ENCODE measurements at regions of chr4 and their contacts with region 1.

Region 1: GRCh38 chr4:108030332-108030731 is 40.6 kb downstream of the HADH start:
- DNase-seq: peak; percentile 66
- H3K4me3 Mint-ChIP-seq: no peak overlapping the region
- H3K27ac Mint-ChIP-seq: peak overlapping the region; percentile 70
- H3K4me1 Mint-ChIP-seq: peaks cover 41% of the 10 kb centered on the region
- H3K27me3 Mint-ChIP-seq: no peaks in the 10 kb centered on the region

Region 2: GRCh38 chr4:108018040-108018883 is 12.1 kb before region 1 on chr4:
- intact Hi-C with region 1: no loop called
- DNase-seq: peak; percentile 70
- H3K4me3 Mint-ChIP-seq: no peak overlapping the region
- H3K27ac Mint-ChIP-seq: peak overlapping the region; percentile 50
- H3K4me1 Mint-ChIP-seq: peaks cover 7% of the 10 kb centered on the region
- H3K27me3 Mint-ChIP-seq: no peaks in the 10 kb centered on the region

Region 3: GRCh38 chr4:108118490-108118889 is 88.2 kb after region 1 on chr4:
- intact Hi-C with region 1: loop called (anchors 1 kb)
- DNase-seq: no peak
- H3K4me3 Mint-ChIP-seq: peak overlapping the region; percentile 38
- H3K27ac Mint-ChIP-seq: peak overlapping the region; percentile 71
- H3K4me1 Mint-ChIP-seq: peaks cover 80% of the 10 kb centered on the region
- H3K27me3 Mint-ChIP-seq: no peaks in the 10 kb centered on the region

Region 4: DNA sequence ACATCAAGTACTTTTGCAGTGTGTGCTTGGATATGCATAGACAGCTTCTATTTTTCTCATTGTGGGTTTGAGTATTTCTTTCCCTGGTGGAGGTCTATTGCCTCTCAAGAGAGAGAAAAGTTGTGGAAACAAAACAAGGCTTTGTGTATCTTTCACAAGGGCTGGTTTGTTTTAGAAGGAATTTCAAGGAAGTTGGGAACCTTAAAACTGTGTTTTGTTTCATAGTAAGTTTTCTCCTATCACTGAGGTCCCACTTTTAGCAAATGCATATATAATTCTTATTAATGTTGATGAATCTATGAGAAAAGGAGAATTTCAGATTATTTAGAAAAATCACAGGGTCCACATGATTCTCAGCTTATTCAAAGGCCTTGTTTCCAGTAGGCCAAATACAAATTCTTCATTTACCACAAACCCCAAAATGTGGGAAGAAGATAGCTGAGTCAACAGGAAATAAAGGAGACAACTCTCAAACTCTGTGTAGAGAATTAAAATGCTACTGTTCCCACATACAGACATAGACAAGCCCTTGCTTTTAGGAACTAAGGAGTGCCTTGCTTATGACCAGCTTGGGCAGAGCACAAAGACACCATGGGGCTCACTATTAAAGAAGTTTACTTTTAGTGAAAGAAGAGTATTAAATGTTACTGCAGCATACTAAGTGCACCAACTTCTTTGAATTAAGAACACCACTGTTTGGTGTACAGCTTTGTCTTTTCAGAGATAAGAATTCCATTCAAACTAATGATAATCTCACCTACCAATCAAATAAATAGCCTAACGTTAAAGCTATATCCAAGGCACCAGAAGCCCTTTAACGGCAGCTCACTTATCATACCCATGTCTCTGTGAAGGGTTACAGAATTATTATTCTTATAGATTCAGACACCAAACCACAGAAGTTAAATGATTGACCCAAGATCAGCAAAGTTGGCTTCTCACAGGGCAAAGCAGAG is 315.8 kb after region 1 on chr4:
- intact Hi-C with region 1: loop called (anchors 10 kb)
- DNase-seq: no peak
- H3K4me3 Mint-ChIP-seq: no peak overlapping the region
- H3K27ac Mint-ChIP-seq: no peak overlapping the region
- H3K4me1 Mint-ChIP-seq: peaks cover 34% of the 10 kb centered on the region
- H3K27me3 Mint-ChIP-seq: no peaks in the 10 kb centered on the region

Region 5: DNA sequence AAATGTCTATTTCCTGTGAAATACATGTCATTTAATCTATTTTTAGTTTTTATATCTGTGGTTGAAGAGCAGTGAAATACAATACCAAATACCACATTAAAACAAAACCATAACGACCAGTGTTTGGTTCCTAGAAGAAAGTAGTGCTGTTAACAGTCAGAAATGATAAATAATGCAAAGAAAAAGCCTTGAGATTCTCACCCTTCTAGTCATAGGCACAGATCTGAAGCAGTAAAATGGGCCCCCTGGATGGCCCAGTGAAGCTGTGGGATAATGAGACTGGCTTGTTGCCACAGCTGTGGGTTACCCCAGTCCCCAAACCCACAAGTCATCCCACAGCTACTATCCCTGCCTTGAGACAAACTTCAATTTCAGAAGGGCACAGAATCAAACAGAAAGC is 452.7 kb after region 1 on chr4:
- intact Hi-C with region 1: loop called (anchors 5 kb)
- DNase-seq: peak; percentile 35
- H3K4me3 Mint-ChIP-seq: peak overlapping the region; percentile 60
- H3K27ac Mint-ChIP-seq: peak overlapping the region; percentile 69
- H3K4me1 Mint-ChIP-seq: peaks cover 36% of the 10 kb centered on the region
- H3K27me3 Mint-ChIP-seq: peaks cover 4% of the 10 kb centered on the region

Region 6: DNA sequence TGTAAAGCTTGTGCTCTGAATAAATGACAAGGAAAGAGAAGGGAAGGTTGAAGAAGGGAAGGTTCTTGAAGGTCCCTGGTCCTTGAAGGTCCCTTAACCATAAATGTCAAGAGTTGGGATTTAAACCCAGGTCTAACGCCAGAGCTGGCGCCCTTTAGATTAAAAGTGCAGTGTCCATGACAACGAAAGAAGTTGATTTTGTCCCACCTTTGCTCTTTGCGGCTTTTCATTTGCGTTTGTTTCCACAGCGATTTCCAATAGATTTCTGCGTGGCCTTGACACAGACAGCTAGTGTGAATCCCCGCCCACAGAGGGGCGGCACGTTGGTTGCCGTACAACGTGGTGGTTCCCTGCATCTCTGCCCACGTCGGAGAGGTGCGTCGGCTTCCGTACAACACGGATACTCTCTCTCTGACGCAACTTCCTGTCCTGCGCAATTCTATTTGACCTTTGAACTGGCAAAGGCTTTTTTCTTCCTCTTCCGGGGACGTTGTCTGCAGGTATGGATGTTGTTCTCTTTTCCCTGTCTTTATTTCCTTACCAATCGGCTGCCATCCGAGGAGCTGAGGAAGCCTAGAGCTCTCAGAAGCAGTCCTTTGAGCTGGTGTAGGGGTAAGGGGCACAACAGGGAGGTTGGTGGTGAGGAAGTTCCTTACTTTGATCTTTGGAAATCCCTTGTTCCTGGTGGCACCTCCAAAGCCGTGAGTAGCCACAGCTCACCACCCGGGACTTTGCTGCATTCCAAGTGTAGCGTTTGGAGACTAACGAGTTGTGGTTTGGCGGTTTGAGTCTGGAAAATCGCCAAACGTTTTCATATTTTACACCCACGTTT is 590.0 kb after region 1 on chr4 and contains the start of gene RPL34:
- intact Hi-C with region 1: loop called (anchors 5 kb)
- DNase-seq: peak; percentile 95
- H3K4me3 Mint-ChIP-seq: peak within 1 kb of the TSS; percentile 99
- H3K27ac Mint-ChIP-seq: peak within 1 kb of the TSS; percentile 95
- H3K4me1 Mint-ChIP-seq: peaks cover 38% of the 10 kb centered on the region
- H3K27me3 Mint-ChIP-seq: no peaks in the 10 kb centered on the region
- total RNA-seq, gene RPL34: 1,375 and 1,412 TPM in 2 replicates

Measured in activated T-helper 2 cell treated with anti-CD3 and anti-CD28 coated beads, Interferon-gamma antibody, Interleukin-2, Interleukin-4, amounts not matched to agents 10 μg/mL and 5 μg/mL and 100 μg/mL, durations not matched to agents 14 hours and 24 hours and 36 hours (primary cell).